A673 (cell line): ENCODE measurements at regions of chr3 and their contacts with region 1.

Region 1: DNA sequence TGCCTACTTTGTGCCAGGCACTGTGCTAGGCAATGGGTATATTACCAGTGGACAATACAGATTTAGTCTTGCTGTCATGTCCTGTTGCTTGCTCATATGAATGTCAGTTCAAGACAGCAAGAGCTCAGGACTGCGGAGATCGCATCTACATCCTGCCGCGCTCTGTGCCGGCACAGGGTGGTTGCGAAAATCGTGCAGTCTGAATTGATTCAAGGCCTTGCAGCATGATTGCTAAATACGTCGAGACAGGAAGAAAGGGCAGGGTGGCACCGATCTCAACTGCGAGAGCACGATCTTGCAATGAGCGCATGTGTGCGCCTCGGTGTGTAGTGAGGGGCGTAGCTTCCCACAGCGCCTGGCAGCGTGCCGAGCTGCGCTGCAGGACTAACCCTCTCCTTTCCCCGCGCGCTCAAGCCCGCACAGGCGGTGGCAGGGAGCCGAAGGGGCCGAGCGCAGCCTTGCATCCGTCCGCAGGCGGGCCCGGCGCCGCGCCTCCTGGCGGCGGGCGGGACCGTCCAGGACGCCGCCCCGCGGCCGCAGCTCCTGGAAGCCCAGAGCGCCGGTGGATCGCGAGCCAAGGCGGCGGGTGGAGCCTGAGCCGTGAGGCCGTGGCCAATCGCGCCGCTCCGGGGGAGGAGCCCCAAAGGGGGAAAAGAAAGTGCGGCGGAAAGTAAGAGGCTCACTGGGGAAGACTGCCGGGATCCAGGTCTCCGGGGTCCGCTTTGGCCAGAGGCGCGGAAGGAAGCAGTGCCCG is at the start of gene IL1RAP:
- DNase-seq: peak; percentile 98
- H3K4me3 ChIP-seq: peak within 1 kb of the TSS; percentile 87
- H3K27ac ChIP-seq: peak within 1 kb of the TSS; percentile 84
- H3K4me1 ChIP-seq: peaks cover 29% of the 10 kb centered on the region
- H3K27me3 ChIP-seq: no peaks in the 10 kb centered on the region
- CTCF ChIP-seq: peak; percentile 50; the same call in 1 of the 2 replicates
- total RNA-seq, gene IL1RAP: 207 and 233 TPM in 2 replicates

Region 2: DNA sequence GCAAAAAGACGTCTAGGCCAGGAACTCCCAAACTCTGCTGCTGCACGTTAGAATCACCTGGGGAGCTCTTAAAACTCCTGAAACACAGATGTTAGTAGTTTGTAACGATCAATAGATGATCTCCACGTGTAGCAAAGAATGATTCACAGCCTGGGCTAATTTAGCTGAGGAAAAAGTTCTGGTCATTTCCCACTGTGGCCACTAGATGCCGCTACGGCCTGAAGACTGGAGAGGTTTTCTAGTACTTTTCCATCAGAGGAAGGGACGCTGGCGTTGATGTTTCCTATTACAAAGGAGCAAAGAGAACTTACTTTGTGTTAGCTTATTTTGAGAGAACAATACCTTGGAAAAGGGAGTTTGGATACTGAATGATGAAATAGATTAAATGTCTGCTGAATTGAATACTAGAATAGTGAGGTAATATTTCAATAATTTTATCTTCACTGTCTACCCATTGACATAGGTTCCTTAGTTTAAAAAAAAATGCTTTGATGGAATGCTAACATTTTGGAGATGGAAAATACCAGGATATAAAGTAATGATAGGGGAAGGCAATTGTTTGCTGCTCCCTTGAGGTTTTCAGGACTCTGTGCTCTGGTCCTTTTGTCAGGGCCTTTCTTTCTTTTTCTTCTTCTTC is 551.9 kb before region 1 on chr3:
- CTCF ChIA-PET with region 1: no interaction called
- POLR2A ChIA-PET with region 1: no interaction called
- intact Hi-C with region 1: loop called (anchors 10 kb)
- DNase-seq: peak; percentile 94
- H3K4me3 ChIP-seq: no peak overlapping the region
- H3K27ac ChIP-seq: no peak overlapping the region
- H3K4me1 ChIP-seq: peaks cover 29% of the 10 kb centered on the region
- H3K27me3 ChIP-seq: no peaks in the 10 kb centered on the region
- CTCF ChIP-seq: peak; percentile 93

Region 3: GRCh38 chr3:190120269-190121060 is 393.1 kb before region 1 on chr3 and contains the start of gene P3H2:
- CTCF ChIA-PET with region 1: no interaction called
- POLR2A ChIA-PET with region 1: interaction called, 13 read pairs
- intact Hi-C with region 1: no loop called
- DNase-seq: peak; percentile 96
- H3K4me3 ChIP-seq: peak within 1 kb of the TSS; percentile 85
- H3K27ac ChIP-seq: peak within 1 kb of the TSS; percentile 53
- H3K4me1 ChIP-seq: peaks cover 4% of the 10 kb centered on the region
- H3K27me3 ChIP-seq: no peaks in the 10 kb centered on the region
- CTCF ChIP-seq: peak; percentile 70
- total RNA-seq, gene P3H2: 19.6 and 21.7 TPM in 2 replicates

Region 4: DNA sequence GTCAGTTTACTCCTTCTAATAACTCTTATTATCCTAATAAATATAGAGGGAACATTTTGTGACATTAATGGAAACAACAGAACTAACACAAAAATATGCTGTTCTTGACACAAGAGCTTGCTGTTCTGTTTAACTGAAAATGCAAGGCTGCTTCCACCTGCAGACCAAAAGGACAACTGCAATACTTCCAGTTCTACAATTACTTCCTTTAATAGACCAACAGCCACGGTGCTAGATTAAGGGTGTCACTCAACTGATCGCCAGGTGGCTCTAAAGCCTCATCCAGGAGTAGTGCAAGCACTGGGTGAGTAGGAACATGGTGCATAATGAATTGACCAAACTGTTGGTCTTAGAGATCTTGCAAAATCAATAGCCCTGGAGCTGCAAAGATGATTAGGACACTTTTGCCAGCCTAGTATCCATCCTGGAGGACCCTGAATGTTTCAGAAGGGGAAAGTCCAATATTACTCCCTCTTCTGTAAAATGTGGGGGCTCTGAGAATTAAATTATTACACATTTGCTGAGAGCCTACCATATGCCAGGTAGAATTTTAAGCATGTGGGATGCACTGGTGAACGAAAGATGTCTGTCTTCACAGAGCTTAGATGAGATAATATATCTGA is 129.2 kb before region 1 on chr3:
- CTCF ChIA-PET with region 1: no interaction called
- POLR2A ChIA-PET with region 1: no interaction called
- intact Hi-C with region 1: loop called (anchors 5 kb)
- DNase-seq: peak; percentile 88
- H3K4me3 ChIP-seq: no peak overlapping the region
- H3K27ac ChIP-seq: peak overlapping the region; percentile 36
- H3K4me1 ChIP-seq: peaks cover 81% of the 10 kb centered on the region
- H3K27me3 ChIP-seq: no peaks in the 10 kb centered on the region
- CTCF ChIP-seq: peak; percentile 80

Region 5: GRCh38 chr3:190497811-190498210 is 15.8 kb before region 1 on chr3:
- CTCF ChIA-PET with region 1: interaction called, 3 read pairs
- POLR2A ChIA-PET with region 1: no interaction called
- intact Hi-C with region 1: loop called (anchors 1 kb)
- DNase-seq: peak; percentile 59
- H3K4me3 ChIP-seq: no peak overlapping the region
- H3K27ac ChIP-seq: no peak overlapping the region
- H3K4me1 ChIP-seq: peaks cover 49% of the 10 kb centered on the region
- H3K27me3 ChIP-seq: no peaks in the 10 kb centered on the region
- CTCF ChIP-seq: no peak

Region 6: GRCh38 chr3:190596349-190597285 is 83.0 kb after region 1 on chr3:
- CTCF ChIA-PET with region 1: interaction called, 3 read pairs
- POLR2A ChIA-PET with region 1: no interaction called
- intact Hi-C with region 1: loop called (anchors 5 kb)
- DNase-seq: peak; percentile 95
- H3K4me3 ChIP-seq: peak overlapping the region; percentile 12
- H3K27ac ChIP-seq: peak overlapping the region; percentile 78
- H3K4me1 ChIP-seq: peaks cover 77% of the 10 kb centered on the region
- H3K27me3 ChIP-seq: no peaks in the 10 kb centered on the region
- CTCF ChIP-seq: no peak